Breast epithelium (tissue), 4 donors: ENCODE measurements at regions of chr2 and their contacts with region 1.

Region 1: GRCh38 chr2:9905379-9905778 is 46.1 kb upstream of the GRHL1 start:
- DNase-seq: no peak
- H3K4me3 ChIP-seq: no peak overlapping the region
- H3K27ac ChIP-seq: no peak overlapping the region
- H3K4me1 ChIP-seq: no peaks in the 10 kb centered on the region
- H3K27me3 ChIP-seq: no peaks in the 10 kb centered on the region
- CTCF ChIP-seq: no peak
- POLR2A ChIP-seq: no peak

Region 2: GRCh38 chr2:9538000-9538507 is 367.3 kb before region 1 on chr2:
- intact Hi-C with region 1: no loop called
- DNase-seq: no peak
- H3K4me3 ChIP-seq: peak overlapping the region in 2 of 3 donors; percentile 15 to 39
- H3K27ac ChIP-seq: peak overlapping the region; percentile 86 to 87
- H3K4me1 ChIP-seq: no peaks in the 10 kb centered on the region
- H3K27me3 ChIP-seq: no peaks in the 10 kb centered on the region
- CTCF ChIP-seq: no peak
- POLR2A ChIP-seq: no peak

Region 3: DNA sequence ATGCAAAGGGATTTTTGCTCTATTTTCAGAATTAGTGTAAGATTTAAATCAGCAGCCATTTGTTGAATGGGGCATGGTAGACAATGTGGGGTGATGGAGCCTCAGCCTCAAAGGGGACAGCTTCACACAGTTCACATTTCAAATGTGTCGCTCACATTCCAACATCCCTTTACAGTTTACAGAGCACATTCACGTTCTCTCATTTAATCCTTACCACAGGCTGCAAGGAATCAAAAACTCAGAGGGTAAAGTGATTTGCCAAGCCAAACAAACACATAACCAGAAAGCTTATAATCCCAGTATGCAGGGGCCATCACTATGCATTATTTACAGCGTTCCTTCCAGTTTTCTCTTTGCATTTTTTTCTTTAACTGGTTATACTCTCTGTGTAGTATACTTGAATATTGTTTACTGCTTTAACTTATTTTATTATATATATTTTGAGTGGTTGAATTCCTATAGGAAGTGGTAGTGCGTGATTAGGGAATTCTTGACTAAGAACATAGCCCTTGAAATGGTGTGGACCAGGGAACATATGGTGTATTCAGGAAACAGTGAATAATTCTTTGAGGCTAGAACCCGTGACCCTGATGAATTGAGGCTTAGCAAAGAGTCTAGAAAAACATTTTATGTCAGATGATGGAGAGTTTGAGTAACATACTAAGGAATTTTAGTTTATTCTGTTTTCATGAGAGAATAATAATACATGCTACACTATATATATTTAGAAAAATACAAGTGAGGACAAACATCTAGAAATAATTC is 80.2 kb before region 1 on chr2:
- intact Hi-C with region 1: no loop called
- DNase-seq: no peak
- H3K4me3 ChIP-seq: no peak overlapping the region
- H3K27ac ChIP-seq: no peak overlapping the region
- H3K4me1 ChIP-seq: no peaks in the 10 kb centered on the region
- H3K27me3 ChIP-seq: no peaks in the 10 kb centered on the region
- CTCF ChIP-seq: no peak
- POLR2A ChIP-seq: no peak

Region 4: GRCh38 chr2:9839356-9839755 is 66.0 kb before region 1 on chr2:
- intact Hi-C with region 1: loop called (anchors 2 kb)
- DNase-seq: no peak
- H3K4me3 ChIP-seq: no peak overlapping the region
- H3K27ac ChIP-seq: no peak overlapping the region
- H3K4me1 ChIP-seq: no peaks in the 10 kb centered on the region
- H3K27me3 ChIP-seq: no peaks in the 10 kb centered on the region
- CTCF ChIP-seq: no peak
- POLR2A ChIP-seq: no peak